SK-N-SH (cell line): ENCODE measurements at regions of chr7 and their contacts with region 1.

Region 1: DNA sequence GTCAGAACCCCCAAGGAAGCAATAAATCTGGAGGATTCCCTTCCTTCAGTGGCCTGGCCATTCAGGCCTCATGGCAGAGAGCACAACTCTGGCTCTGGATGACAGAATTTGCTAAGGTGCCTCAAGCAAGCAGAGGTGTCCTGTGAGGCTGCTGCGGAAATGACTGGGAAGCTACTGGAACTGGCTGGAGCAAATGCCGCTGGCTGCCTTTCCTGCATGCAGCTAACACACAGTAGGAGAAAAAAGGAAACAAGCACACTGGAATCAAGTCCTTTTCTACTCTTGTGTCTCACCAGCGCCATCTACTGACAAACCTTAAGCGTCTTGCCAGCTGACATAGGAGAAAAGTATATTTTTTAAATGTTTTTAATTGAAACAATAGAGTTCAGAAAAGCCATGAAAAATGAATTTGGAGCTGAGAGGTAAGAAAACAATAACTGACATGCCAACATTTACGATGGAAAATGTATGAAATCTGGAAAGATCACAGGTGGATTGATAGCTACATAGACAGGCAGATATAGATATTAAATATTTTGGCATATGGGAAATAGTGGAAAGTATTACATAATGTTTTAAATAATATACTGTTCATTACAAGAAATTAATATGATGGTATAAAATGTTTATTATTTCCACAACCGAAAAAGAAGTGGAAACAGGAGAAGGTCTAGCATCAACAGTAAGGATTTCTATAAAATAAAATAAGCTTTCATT is 951.6 kb downstream of the ANKRD7 start:
- DNase-seq: peak; percentile 26
- H3K4me3 ChIP-seq: no peak overlapping the region; a peak in 1 of 4 replicates
- H3K27ac ChIP-seq: no peak overlapping the region
- H3K4me1 ChIP-seq: peaks cover 0 to 3% of the 10 kb centered on the region in 2 experiments; a peak in 2 of 4 replicates
- H3K27me3 ChIP-seq: no peaks in the 10 kb centered on the region
- CTCF ChIP-seq: peak; percentile 99
- EP300 ChIP-seq: no peak
- RAD21 ChIP-seq: peak; percentile 90

Region 2: DNA sequence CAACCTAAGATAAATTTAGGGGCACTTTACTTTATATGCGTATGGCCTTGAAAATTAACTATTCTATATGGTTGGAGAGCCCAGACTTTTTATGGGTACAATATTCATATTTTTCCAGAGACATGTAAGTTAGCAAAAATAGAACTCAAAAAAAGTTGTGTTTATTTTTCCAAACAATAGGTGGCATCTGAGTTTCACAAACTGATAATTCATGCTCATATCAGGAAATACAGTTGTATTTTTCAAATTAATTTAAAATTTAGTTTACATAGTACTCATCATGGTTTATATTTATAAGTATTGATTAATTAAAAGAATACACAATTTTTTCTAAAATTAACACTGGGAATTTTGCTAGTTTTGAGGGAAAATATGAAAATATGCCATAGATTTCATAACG is 917.0 kb before region 1 on chr7:
- CTCF ChIA-PET with region 1: interaction called, 11 read pairs
- POLR2A ChIA-PET with region 1: no interaction called
- DNase-seq: no peak
- H3K4me3 ChIP-seq: no peak overlapping the region
- H3K27ac ChIP-seq: no peak overlapping the region
- H3K4me1 ChIP-seq: no peaks in the 10 kb centered on the region
- H3K27me3 ChIP-seq: no peaks in the 10 kb centered on the region
- CTCF ChIP-seq: peak; percentile 42
- EP300 ChIP-seq: no peak
- RAD21 ChIP-seq: peak; percentile 65

Region 3: DNA sequence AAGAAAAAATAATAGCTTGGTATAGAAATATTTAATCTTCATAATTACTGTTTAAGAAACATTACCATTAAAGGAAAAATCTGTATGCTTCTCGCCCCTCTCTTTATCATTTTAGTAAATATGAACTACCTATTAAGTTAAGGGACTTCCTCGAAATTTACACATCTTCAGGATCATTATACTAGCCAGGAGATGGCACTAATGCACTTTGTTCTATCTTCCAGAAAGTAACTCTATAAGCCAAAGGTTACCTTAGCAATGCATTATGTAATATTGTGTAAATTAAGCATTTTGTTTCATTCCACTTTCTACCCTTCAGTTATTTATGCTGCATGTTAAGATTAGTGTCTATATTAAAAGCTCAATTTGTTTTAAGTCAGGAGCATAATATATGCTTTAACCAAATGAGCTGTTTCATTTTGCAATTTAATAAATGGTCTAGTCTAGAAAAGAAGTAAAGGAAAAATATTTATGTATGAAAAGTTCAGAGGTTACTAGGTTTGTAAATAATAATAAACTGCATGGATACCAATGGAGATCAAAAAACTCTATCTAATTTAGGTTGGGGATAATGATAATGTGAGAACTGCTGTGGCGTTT is 823.1 kb before region 1 on chr7:
- CTCF ChIA-PET with region 1: interaction called, 52 read pairs
- POLR2A ChIA-PET with region 1: no interaction called
- DNase-seq: peak; percentile 16
- H3K4me3 ChIP-seq: no peak overlapping the region
- H3K27ac ChIP-seq: no peak overlapping the region
- H3K4me1 ChIP-seq: no peaks in the 10 kb centered on the region
- H3K27me3 ChIP-seq: no peaks in the 10 kb centered on the region
- CTCF ChIP-seq: peak; percentile 57
- EP300 ChIP-seq: no peak
- RAD21 ChIP-seq: peak; percentile 88

Region 4: GRCh38 chr7:118918556-118918955 is 257.5 kb before region 1 on chr7:
- CTCF ChIA-PET with region 1: interaction called, 88 read pairs
- POLR2A ChIA-PET with region 1: no interaction called
- DNase-seq: peak; percentile 1
- H3K4me3 ChIP-seq: no peak overlapping the region
- H3K27ac ChIP-seq: no peak overlapping the region
- H3K4me1 ChIP-seq: no peaks in the 10 kb centered on the region
- H3K27me3 ChIP-seq: no peaks in the 10 kb centered on the region
- CTCF ChIP-seq: peak; percentile 71
- EP300 ChIP-seq: no peak
- RAD21 ChIP-seq: peak; percentile 83

Region 5: DNA sequence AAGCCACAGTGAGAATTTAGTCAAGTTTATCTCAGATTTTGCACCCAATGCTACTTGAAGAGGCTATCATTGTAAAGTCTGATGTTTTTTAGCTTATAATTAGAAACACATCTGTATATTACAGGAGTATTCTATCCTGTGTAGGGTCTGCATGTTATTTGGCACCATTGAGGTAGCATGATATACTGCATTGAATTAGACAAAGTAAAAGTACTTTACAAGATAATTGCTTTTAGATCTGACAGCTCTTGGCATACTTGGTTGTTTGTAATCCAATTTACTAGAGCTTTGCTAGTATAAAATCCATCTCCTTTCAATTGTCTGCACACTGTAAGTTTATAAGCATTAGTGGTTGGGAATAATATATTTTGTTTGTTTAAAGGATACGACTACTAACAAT is 237.2 kb before region 1 on chr7:
- CTCF ChIA-PET with region 1: interaction called, 10 read pairs
- POLR2A ChIA-PET with region 1: no interaction called
- DNase-seq: no peak
- H3K4me3 ChIP-seq: no peak overlapping the region
- H3K27ac ChIP-seq: no peak overlapping the region
- H3K4me1 ChIP-seq: no peaks in the 10 kb centered on the region; a peak in 1 of 4 replicates
- H3K27me3 ChIP-seq: no peaks in the 10 kb centered on the region
- CTCF ChIP-seq: no peak
- EP300 ChIP-seq: no peak
- RAD21 ChIP-seq: no peak

Region 6: GRCh38 chr7:119197877-119198527 is 21.9 kb after region 1 on chr7:
- CTCF ChIA-PET with region 1: interaction called, 79 read pairs
- POLR2A ChIA-PET with region 1: no interaction called
- DNase-seq: peak; percentile 36
- H3K4me3 ChIP-seq: no peak overlapping the region
- H3K27ac ChIP-seq: no peak overlapping the region
- H3K4me1 ChIP-seq: peaks cover 0 to 5% of the 10 kb centered on the region in 2 experiments; a peak in 1 of 4 replicates
- H3K27me3 ChIP-seq: no peaks in the 10 kb centered on the region
- CTCF ChIP-seq: peak; percentile 94
- EP300 ChIP-seq: no peak
- RAD21 ChIP-seq: peak; percentile 83